Activated CD4-positive, alpha-beta T cell treated with anti-CD3 and anti-CD28 coated beads for 36 hours (primary cell): ENCODE measurements at regions of chr19 and their contacts with region 1.

Region 1: DNA sequence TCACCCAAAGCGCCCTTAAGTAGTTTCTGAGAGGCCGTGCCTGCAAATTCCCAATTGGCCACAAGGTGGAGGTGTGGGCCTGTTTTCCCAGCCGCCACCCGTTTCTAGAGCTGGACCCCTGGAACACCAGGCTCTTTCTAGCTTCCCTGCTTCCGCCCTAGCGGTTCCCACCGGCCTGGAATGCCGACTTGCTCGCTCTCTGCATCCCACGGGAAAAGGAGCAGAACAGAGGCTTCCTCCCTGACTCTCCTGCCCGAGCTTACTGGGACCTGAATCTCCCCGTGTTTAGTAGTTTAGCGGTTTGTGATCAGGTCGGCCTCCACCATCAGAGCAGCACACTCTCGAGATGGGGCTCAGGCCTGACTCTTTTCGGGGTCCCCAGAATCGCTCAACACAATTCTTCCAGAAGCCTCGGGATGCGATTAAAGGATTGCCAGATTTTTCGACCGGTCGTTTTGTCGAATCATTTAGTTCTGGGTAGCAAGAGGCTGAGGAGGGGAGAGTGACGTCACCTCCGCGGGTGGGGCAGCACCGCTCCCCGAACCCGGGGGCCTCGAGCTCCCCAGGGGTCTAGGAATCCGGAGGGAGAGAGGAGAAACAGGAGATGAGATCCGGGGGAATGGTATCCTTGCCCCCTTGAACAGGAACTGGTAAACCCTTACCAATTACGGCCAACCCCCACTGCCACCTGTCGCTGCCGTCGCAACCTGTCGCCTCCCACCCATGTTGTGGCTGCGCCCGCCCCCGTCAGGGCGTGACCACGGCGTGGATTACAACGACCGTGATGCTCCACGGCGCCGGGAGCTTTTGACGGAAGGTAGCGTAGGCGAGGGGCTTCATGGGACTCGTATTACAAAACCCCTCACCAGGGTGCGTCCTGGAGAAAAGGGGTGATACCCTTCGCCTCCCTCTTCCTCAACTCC is 8.0 kb downstream of the NAPSA start:
- DNase-seq: peak; percentile 93
- ATAC-seq: peak; percentile 62
- H3K4me3 Mint-ChIP-seq: peak overlapping the region; percentile 82
- H3K27ac Mint-ChIP-seq: peak overlapping the region; percentile 99
- H3K4me1 Mint-ChIP-seq: peaks cover 47% of the 10 kb centered on the region
- H3K27me3 Mint-ChIP-seq: peaks cover 3% of the 10 kb centered on the region

Region 2: DNA sequence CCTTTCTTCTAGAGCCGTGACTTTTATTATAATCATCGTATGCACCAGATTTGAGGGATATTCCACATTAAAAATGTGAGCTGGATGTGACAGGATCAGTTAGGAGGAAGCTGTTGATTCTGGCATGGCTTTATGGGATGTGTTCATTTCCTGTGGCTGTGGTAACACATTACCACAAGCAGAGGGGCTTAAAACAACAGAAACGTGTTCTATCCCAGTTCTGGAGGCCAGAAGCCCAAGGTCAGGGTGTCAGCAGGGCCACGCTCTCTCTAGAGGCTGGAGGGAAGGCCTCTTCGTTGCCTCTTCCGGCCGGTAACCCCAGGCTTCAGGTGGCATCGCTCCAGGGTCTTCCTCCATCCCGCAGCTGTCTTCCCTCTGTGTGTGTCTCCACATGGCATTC is 524.9 kb before region 1 on chr19:
- CTCF ChIA-PET with region 1: no interaction called
- POLR2A ChIA-PET with region 1: no interaction called
- intact Hi-C with region 1: no loop called
- DNase-seq: no peak
- ATAC-seq: no peak
- H3K4me3 Mint-ChIP-seq: no peak overlapping the region
- H3K27ac Mint-ChIP-seq: no peak overlapping the region
- H3K4me1 Mint-ChIP-seq: no peaks in the 10 kb centered on the region
- H3K27me3 Mint-ChIP-seq: no peaks in the 10 kb centered on the region

Region 3: DNA sequence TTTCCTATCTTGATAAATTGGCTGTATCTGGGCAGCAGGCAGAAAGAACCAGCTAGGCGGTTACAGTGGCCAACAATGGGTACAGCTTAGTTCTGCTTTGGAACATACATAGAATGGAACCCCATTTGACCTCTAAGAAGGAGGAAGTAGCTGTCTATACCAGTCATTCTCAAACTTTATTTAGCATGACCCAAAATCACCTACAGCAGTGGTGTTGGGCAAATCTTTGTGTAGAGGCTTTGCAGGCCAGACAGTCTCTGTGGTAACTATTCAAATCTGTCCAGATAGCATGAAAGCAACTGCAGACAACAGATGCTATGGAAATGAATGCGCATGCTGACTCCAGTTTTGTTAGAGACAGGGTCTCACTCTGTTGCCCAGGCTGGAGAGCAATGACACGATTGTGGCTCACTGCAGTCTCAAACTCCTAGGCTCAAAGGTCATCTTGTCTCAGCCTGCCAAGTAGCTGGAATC is 16.3 kb before region 1 on chr19:
- CTCF ChIA-PET with region 1: interaction called, 18 read pairs
- POLR2A ChIA-PET with region 1: no interaction called
- intact Hi-C with region 1: no loop called
- DNase-seq: no peak
- ATAC-seq: peak; percentile 63
- H3K4me3 Mint-ChIP-seq: no peak overlapping the region
- H3K27ac Mint-ChIP-seq: no peak overlapping the region
- H3K4me1 Mint-ChIP-seq: peaks cover 16% of the 10 kb centered on the region
- H3K27me3 Mint-ChIP-seq: peaks cover 3% of the 10 kb centered on the region

Region 4: DNA sequence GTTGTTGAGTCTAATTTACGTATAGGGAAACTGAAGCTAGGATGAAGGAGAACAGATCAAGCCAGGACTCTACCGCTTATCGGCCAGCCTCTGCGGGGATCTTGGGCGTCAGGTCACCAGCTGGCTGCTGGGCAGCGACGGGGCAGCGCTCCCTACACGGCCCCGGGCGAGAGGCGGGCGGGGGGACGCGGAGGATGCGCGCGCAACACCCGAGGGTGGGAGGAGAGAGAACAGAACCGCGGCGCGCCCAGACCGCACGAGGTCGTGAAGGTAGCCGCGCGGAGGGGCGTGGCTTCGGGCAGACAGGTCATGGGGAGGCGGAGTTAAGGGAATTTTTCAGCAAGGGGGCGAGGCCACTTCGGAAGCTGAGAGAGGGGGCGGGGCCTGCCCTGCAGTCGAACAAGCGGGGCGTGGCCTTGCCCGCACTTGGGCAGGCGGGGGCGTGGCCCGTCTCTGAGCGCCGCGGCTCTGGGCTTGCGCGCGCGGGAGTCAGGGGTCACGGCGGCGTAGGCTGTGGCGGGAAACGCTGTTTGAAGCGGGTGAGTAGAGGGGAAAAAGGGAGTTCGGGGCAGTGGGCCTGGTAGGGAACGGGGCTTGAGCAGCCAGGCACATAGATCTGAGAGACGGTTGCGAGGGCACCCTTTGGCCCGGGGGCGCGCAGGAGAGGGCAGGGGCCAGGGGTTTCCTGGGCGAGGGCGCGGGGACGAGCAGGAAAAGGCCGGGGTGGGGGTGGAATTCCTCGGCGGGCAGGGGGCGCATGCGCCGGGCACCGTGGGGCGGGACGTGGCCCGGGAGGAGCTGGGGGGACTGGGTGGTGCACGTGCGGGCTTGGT is 26.6 kb after region 1 on chr19 and contains the start of gene POLD1:
- CTCF ChIA-PET with region 1: interaction called, 4 read pairs
- POLR2A ChIA-PET with region 1: interaction called, 4 read pairs
- intact Hi-C with region 1: loop called in 1 of 2 experiments (anchors 1 kb)
- DNase-seq: peak; percentile 100
- ATAC-seq: peak; percentile 92
- H3K4me3 Mint-ChIP-seq: peak within 1 kb of the TSS; percentile 99
- H3K27ac Mint-ChIP-seq: peak within 1 kb of the TSS; percentile 93
- H3K4me1 Mint-ChIP-seq: peaks cover 27% of the 10 kb centered on the region
- H3K27me3 Mint-ChIP-seq: no peaks in the 10 kb centered on the region
- total RNA-seq, gene POLD1: 220 to 227 TPM

Region 5: DNA sequence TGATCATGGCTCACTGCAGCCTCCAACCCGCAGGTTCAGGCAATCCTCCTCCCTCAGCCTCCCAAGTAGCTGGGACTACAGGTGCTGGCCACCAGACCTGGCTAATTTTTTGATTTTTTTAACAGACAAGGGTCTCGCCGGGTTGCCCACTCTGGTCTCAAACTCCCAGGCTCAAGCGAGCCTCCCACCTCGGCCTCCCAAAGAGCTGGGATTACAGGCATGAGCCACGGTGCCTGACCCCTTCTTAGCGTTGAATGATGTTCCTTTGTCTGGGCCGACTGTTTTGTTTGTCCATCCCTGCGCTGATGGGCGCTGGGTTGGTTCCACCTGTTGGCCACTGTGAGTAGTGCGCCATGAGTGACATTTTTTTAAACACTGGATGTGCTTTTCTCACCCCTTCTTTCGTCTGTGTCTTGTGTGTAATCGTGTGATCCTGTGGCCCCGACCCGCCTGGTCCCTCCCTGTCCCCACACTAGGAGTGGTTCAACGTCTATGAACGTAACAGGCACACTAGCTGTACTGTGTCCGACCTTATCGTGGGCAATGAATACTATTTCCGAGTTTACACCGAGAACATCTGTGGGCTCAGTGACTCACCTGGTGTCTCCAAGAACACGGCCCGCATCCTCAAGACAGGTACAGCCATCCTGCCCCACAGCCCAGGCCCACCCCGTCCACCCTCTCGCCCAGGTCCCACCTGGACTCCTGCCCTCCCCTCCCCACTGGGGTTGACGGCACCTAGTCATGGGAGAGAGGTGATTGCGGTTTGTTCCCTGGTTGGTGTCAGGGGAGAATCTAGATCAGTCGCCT is 103.8 kb after region 1 on chr19:
- CTCF ChIA-PET with region 1: interaction called, 22 read pairs
- POLR2A ChIA-PET with region 1: no interaction called
- intact Hi-C with region 1: loop called (anchors 1 kb)
- DNase-seq: peak; percentile 79
- ATAC-seq: peak; percentile 70
- H3K4me3 Mint-ChIP-seq: peak overlapping the region; percentile 3
- H3K27ac Mint-ChIP-seq: no peak overlapping the region
- H3K4me1 Mint-ChIP-seq: peaks cover 16% of the 10 kb centered on the region
- H3K27me3 Mint-ChIP-seq: peaks cover 25% of the 10 kb centered on the region

Region 6: GRCh38 chr19:50556282-50557008 is 199.0 kb after region 1 on chr19:
- CTCF ChIA-PET with region 1: interaction called, 13 read pairs
- POLR2A ChIA-PET with region 1: no interaction called
- intact Hi-C with region 1: loop called in 1 of 2 experiments (anchors 1 kb)
- DNase-seq: peak; percentile 92
- ATAC-seq: peak; percentile 89
- H3K4me3 Mint-ChIP-seq: peak overlapping the region; percentile 68
- H3K27ac Mint-ChIP-seq: peak overlapping the region; percentile 85
- H3K4me1 Mint-ChIP-seq: peaks cover 2% of the 10 kb centered on the region
- H3K27me3 Mint-ChIP-seq: peaks cover 53% of the 10 kb centered on the region

Region 7: DNA sequence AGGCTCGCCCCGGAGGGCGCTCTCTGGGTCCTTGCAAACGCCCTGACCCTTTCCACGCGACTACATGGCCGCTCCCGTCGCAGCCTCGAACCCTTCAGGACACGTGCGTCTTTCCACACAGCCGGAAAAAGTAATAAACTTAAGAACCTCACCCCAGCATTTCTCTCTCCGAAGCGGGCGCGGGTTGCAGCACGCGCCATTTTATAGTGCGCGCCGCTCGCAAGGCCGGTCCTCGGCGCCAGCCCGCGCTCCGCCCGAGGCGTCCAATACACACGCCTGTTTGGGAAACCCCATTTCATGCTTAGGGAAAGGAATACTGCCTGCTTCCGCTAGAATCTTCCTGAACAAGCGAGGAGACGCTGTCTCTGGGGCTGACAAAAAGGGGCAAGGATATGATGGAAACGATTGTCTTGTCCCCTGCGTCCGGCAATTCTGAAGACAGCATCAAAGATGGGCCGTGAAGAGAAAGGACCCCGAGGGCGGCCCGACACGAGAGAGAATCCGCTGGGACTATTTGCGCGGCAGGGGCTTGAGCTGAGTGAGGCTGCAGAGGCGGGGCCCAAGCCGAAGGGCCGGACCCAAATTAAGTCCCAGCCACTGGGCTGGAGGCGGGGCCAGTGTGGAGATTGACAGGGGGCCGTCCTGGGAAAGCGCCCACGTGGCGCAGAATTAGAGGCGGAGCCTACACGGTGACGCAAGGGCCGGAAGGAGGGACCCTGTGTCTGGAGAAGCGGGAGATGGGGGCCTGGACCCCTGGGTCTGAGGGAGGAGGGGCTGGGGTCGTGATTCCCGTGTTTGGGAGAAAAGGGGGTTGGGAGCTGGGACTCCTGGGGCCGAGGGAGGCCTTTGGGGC is 447.2 kb after region 1 on chr19:
- CTCF ChIA-PET with region 1: no interaction called
- POLR2A ChIA-PET with region 1: no interaction called
- intact Hi-C with region 1: loop called (anchors 5 to 10 kb)
- DNase-seq: peak; percentile 99
- ATAC-seq: peak; percentile 99
- H3K4me3 Mint-ChIP-seq: peak overlapping the region; percentile 96
- H3K27ac Mint-ChIP-seq: peak overlapping the region; percentile 98
- H3K4me1 Mint-ChIP-seq: peaks cover 35% of the 10 kb centered on the region
- H3K27me3 Mint-ChIP-seq: no peaks in the 10 kb centered on the region